Tibial artery (tissue), 4 donors: ENCODE measurements at regions of chr1 and their contacts with region 1.

Region 1: DNA sequence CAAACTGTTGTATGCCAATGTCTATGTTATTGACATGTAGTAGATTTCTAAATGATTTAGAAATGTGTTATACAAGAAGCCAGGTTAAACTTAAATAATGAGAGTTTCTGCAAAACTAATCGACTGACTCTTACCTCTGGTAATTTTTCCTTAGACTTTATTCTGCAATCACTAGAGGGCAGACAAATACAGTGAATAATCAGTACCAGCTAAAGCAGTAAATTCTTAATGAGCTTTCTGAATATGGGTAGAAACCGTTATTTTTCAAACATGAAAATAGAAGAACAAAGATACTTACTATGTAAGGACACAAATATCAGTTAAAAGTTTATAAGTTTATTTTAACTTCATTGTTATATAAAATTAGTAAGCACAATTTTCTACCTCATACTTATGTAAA is 97.9 kb upstream of the RGS1 start:
- DNase-seq: no peak
- H3K4me3 ChIP-seq: no peak overlapping the region
- H3K27ac ChIP-seq: no peak overlapping the region
- H3K4me1 ChIP-seq: peaks cover 0 to 4% (median 0%) of the 10 kb centered on the region in 4 donors
- H3K27me3 ChIP-seq: no peaks in the 10 kb centered on the region
- CTCF ChIP-seq: peak; percentile 56 to 74

Region 2: GRCh38 chr1:192580351-192580962 is 102.8 kb after region 1 on chr1:
- intact Hi-C with region 1: loop called (anchors 2 kb)
- DNase-seq: no peak
- H3K4me3 ChIP-seq: no peak overlapping the region
- H3K27ac ChIP-seq: no peak overlapping the region
- H3K4me1 ChIP-seq: peaks cover 0 to 8% (median 0%) of the 10 kb centered on the region in 4 donors
- H3K27me3 ChIP-seq: no peaks in the 10 kb centered on the region
- CTCF ChIP-seq: peak; percentile 56 to 57

Region 3: DNA sequence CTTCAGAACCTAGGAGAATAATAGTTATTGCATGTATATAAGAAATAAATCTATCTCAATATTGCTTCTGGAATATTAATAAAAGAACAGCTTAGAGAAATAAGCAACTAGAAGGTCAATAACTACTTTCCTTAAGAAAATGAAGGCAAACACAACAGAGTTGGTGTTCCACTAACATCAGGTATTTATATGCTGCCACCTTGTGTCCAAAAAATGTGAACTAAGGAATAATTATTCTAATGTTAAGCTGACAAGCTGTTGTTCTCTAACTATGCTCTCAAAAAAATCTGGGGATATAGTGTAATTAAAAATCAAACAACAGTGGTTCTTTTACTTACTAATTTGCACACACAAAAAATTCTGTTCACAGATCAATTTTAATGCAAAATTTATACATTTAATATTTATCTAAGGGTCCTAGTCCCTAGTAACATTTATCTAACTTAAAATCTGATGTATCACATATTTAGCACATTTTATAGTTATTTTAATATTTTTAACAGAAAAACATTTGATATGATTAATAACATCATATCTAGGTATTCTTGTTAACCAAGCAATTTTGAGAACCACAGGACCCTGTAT is 541.9 kb after region 1 on chr1:
- intact Hi-C with region 1: loop called (anchors 5 kb)
- DNase-seq: no peak
- H3K4me3 ChIP-seq: no peak overlapping the region
- H3K27ac ChIP-seq: no peak overlapping the region
- H3K4me1 ChIP-seq: peaks cover 0 to 2% (median 0%) of the 10 kb centered on the region in 4 donors
- H3K27me3 ChIP-seq: no peaks in the 10 kb centered on the region
- CTCF ChIP-seq: peak; percentile 60 to 63